ENCODE measurements at regions of chr2 and their contacts with region 1.

Region 1: GRCh38 chr2:169824373-169825333 is at the start of gene METTL5:
- DNase-seq: peak; percentile 89
- ATAC-seq: peak; percentile 73
- H3K4me3 Mint-ChIP-seq: peak within 1 kb of the TSS; percentile 90
- H3K27ac Mint-ChIP-seq: peak within 1 kb of the TSS; percentile 87
- H3K4me1 Mint-ChIP-seq: peaks cover 31% of the 10 kb centered on the region
- H3K27me3 Mint-ChIP-seq: peaks cover 9% of the 10 kb centered on the region
- CTCF ChIP-seq: peak; percentile 78
- total RNA-seq, gene METTL5: 89.9 to 90.9 TPM (median 90.4 TPM) in 3 replicates

Region 2: DNA sequence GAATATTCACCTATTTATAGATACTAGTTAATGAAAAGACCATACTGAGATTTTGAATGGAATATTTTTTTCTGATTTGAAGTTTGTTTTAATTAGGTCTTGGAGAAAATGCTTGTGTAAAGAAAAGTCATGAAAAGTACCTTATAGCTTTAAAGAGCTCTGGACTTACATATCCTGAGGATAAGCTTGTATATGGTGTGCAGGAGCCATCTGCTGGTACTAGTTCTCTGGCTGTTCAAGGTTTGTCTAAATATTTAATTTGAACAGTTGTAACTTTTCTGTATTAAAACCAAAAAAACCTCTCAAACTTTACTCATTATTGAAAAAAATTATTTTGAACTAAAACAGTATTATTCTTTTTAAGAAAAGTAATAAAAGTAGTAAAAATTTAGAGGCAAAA is 52.7 kb after region 1 on chr2:
- CTCF ChIA-PET with region 1: interaction called, 17 read pairs
- POLR2A ChIA-PET with region 1: interaction called, 4 read pairs
- DNase-seq: no peak
- ATAC-seq: no peak
- H3K4me3 Mint-ChIP-seq: no peak overlapping the region
- H3K27ac Mint-ChIP-seq: no peak overlapping the region
- H3K4me1 Mint-ChIP-seq: no peaks in the 10 kb centered on the region
- H3K27me3 Mint-ChIP-seq: no peaks in the 10 kb centered on the region
- CTCF ChIP-seq: no peak

Region 3: DNA sequence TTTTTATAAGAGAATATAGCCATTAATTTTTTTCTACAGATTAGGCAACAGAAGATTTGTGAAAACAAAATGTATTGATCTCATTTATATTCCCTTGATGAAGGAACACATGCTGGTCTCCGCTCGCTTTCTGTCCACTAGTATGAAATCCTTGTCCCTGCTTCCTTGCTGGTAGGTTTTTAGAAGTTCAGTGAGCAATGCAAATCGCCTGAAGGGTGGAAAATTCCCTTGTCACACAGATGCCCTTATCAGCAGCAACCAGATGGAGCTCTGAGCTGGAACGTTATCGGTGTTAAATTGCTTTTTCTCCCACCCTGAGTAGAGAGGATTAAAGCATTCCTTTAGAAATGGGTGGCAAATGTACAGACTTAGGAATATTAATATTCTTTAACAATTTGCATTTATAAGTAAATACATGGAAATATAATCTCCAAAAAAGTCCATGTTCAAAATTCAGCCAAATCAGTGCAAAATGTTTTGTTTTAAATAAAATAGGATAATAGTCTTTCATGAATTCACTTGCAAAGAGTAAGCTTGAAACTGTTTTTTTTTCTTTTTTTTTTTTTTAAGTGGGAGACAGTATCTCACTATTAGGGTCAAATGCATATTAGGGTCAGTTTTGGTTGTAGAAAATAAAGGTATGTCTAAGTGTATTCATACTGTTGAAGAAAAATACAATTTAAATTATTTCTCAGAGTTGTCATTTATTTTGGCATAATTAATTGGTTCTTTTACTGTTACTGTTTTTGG is 189.3 kb after region 1 on chr2:
- CTCF ChIA-PET with region 1: no interaction called
- POLR2A ChIA-PET with region 1: no interaction called
- DNase-seq: peak; percentile 17
- ATAC-seq: peak; percentile 65
- H3K4me3 Mint-ChIP-seq: no peak overlapping the region
- H3K27ac Mint-ChIP-seq: peak overlapping the region; percentile 80
- H3K4me1 Mint-ChIP-seq: peaks cover 12% of the 10 kb centered on the region
- H3K27me3 Mint-ChIP-seq: no peaks in the 10 kb centered on the region
- CTCF ChIP-seq: no peak

Measured in WTC11 (cell line).